Mammary epithelial cell (primary cell): ENCODE measurements at regions of chr16 and their contacts with region 1.

Region 1: DNA sequence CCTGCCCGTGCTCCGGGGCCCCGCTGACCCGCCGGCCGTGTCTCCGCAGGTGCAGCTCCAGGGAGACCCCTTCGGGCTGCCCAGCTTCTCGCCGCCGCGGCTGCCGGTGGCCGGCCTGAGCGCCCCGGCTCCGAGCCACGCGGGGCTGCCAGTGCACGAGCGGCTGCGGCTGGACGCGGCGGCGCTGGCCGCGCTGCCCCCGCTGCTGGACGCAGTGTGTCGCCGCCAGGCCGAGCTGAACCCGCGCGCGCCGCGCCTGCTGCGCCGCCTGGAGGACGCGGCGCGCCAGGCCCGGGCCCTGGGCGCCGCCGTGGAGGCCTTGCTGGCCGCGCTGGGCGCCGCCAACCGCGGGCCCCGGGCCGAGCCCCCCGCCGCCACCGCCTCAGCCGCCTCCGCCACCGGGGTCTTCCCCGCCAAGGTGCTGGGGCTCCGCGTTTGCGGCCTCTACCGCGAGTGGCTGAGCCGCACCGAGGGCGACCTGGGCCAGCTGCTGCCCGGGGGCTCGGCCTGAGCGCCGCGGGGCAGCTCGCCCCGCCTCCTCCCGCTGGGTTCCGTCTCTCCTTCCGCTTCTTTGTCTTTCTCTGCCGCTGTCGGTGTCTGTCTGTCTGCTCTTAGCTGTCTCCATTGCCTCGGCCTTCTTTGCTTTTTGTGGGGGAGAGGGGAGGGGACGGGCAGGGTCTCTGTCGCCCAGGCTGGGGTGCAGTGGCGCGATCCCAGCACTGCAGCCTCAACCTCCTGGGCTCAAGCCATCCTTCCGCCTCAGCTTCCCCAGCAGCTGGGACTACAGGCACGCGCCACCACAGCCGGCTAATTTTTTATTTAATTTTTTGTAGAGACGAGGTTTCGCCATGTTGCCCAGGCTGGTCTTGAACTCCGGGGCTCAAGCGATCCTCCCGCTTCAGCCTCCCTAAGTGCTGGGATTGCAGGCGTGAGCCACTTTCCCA is 5.9 kb downstream of the CTF1 start:
- DNase-seq: peak; percentile 31
- H3K4me3 ChIP-seq: peak overlapping the region; percentile 27 to 52 (median 51)
- H3K27ac ChIP-seq: no peak overlapping the region
- H3K4me1 ChIP-seq: peaks cover 4% of the 10 kb centered on the region
- H3K27me3 ChIP-seq: no peaks in the 10 kb centered on the region
- CTCF ChIP-seq: peak in 1 of 2 donors; percentile 23

Region 2: GRCh38 chr16:30844671-30845449 is 57.4 kb before region 1 on chr16:
- CTCF ChIA-PET with region 1: no interaction called
- dilution Hi-C with region 1: no loop called
- in situ Hi-C with region 1: loop called in 1 of 2 experiments (anchors 5 kb)
- intact Hi-C with region 1: loop called (anchors 1 kb)
- DNase-seq: peak; percentile 68
- H3K4me3 ChIP-seq: no peak overlapping the region
- H3K27ac ChIP-seq: no peak overlapping the region
- H3K4me1 ChIP-seq: no peaks in the 10 kb centered on the region
- H3K27me3 ChIP-seq: no peaks in the 10 kb centered on the region
- CTCF ChIP-seq: peak; percentile 88 to 93